Lower leg skin (tissue), 4 donors: ENCODE measurements at regions of chr4 and their contacts with region 1.

Region 1: GRCh38 chr4:74768857-74769525 is 25.3 kb downstream of the BTC start:
- DNase-seq: no peak
- H3K4me3 ChIP-seq: no peak overlapping the region
- CTCF ChIP-seq: no peak
- POLR2A ChIP-seq: no peak

Region 2: GRCh38 chr4:74338792-74339333 is 430.1 kb before region 1 on chr4:
- intact Hi-C with region 1: no loop called
- DNase-seq: no peak
- H3K4me3 ChIP-seq: no peak overlapping the region
- CTCF ChIP-seq: no peak
- POLR2A ChIP-seq: no peak

Region 3: GRCh38 chr4:74790652-74791443 is 21.9 kb after region 1 on chr4:
- intact Hi-C with region 1: loop called (anchors 2 kb)
- DNase-seq: no peak
- H3K4me3 ChIP-seq: no peak overlapping the region
- CTCF ChIP-seq: no peak
- POLR2A ChIP-seq: no peak

Region 4: DNA sequence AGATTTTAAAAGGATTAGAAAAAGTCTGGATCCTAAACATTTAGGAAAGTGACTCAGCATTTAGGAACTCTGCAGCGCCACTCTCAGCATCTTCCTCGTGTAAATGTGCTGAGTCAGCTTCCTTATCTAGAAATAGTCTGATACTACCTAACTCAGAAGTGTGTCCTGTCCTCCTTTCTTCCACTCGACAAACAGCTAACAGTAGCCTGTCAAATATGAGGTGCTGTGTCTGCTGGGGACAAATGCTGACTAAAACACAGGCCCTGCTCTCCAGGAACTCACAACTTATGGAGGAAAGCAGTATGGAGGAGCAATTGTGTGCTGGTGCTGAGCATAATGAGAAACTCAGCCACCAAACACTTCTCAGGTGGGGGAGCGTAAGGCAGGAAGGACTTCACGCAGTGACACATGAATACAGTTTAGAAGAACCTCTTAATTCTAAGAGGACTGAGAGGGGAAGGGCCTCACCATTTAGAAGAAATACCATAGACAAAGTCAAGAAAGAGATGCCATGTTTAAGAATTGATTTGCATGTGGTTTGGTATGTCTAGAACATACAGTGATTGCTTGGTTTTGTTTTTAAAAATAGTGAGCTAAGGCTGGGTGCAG is 2003.6 kb after region 1 on chr4:
- intact Hi-C with region 1: no loop called
- DNase-seq: no peak
- H3K4me3 ChIP-seq: no peak overlapping the region
- CTCF ChIP-seq: no peak
- POLR2A ChIP-seq: no peak